OCI-LY7 (cell line): ENCODE measurements at regions of chr1 and their contacts with region 1.

Region 1: DNA sequence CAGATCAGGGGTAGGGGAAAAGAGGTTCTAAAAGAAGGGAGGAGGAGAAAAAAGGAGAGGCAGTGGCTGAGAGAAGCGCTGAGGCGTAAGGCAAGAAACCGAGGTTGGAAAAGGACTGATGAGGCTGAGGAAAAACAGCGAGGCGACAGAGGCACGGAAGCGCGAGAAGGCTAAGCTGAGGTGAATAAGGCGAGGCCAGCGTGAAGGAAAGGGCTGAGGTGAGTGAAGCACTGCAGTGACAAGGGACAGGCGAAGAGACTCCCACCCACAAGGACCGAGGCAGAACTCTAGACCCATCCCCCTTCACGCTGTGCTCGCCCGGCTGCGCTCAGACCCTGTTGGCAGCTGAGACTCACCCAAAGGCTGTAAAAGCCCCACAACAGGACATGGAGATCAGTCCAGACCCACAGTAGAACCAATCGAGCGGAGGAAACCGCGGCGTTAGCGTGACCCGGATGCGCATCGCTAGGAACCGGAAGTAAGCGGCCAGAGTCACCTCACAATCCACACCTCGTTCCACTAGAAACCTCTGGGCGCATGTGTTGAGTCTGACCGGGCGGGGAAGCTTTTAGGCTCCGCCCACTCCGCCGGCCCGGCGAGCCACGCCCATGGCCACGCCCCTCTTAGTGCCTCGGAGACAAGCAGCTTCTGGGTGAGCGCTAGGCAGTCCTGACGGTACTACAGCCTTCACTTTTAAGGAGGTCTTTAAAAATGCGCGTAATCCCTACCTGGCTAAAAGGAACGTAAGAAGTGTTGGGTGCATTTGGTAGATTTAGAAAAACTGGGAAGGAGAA is at the start of gene EYA3:
- DNase-seq: peak; percentile 99
- H3K4me3 ChIP-seq: peak within 1 kb of the TSS; percentile 75
- H3K27ac ChIP-seq: peak within 1 kb of the TSS; percentile 82
- H3K4me1 ChIP-seq: peaks cover 58% of the 10 kb centered on the region
- CTCF ChIP-seq: no peak
- total RNA-seq, gene EYA3: 24.1 and 29.0 TPM in 2 replicates

Region 2: GRCh38 chr1:27634177-27634984 is 454.0 kb before region 1 on chr1:
- CTCF ChIA-PET with region 1: no interaction called
- POLR2A ChIA-PET with region 1: no interaction called
- intact Hi-C with region 1: no loop called
- DNase-seq: no peak
- H3K4me3 ChIP-seq: no peak overlapping the region
- H3K27ac ChIP-seq: no peak overlapping the region
- H3K4me1 ChIP-seq: peaks cover 51% of the 10 kb centered on the region
- CTCF ChIP-seq: no peak

Region 3: GRCh38 chr1:27858072-27858958 is 230.1 kb before region 1 on chr1:
- CTCF ChIA-PET with region 1: no interaction called
- POLR2A ChIA-PET with region 1: no interaction called
- intact Hi-C with region 1: loop called (anchors 2 kb)
- DNase-seq: peak; percentile 80
- H3K4me3 ChIP-seq: no peak overlapping the region
- H3K27ac ChIP-seq: no peak overlapping the region
- H3K4me1 ChIP-seq: peaks cover 11% of the 10 kb centered on the region
- CTCF ChIP-seq: peak; percentile 97

Region 4: DNA sequence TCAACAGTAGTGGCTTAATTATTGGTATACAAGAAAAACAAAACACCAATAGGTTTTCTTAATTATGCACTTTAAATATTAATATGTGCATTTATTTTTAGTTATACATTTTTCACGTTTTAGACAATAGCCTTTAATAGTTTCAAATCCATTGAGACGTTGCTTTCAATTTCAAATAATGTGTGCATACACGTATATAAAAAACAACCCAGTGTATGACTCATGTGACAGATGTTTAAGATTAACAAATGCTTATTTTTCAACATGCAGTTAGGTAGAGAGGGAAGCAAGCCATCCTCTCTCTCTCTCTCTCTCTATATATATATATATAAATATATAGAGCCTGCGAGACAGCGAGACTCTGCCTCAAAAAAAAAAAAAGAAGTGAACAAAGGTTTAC is 24.3 kb before region 1 on chr1:
- CTCF ChIA-PET with region 1: interaction called, 5 read pairs
- POLR2A ChIA-PET with region 1: interaction called, 138 read pairs
- intact Hi-C with region 1: loop called (anchors 1 kb)
- DNase-seq: peak; percentile 44
- H3K4me3 ChIP-seq: peak overlapping the region; percentile 63
- H3K27ac ChIP-seq: peak overlapping the region; percentile 88
- H3K4me1 ChIP-seq: peaks cover 81% of the 10 kb centered on the region
- CTCF ChIP-seq: no peak

Region 5: DNA sequence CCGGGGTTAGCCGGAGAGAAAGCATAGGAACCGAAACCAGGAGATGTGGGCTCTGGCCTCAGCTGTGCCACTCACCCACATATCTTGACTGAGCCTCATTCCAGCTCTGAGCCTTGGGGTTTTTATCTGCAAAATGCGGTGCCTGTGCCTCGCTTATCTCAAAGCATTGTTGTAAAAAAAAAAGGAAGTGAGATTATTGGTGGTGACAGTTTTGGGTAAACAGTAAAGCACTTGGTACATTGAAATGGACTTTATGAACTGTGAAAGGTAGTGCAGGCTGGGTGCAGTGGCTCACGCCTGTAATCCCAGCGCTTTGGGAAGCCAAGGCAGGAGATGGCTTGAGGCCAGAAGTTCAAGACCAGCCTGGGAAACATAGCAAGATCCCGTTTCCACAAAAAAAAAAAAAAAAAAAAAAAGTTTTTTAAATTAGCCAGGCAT is 84.4 kb after region 1 on chr1:
- CTCF ChIA-PET with region 1: interaction called, 18 read pairs
- POLR2A ChIA-PET with region 1: interaction called, 10 read pairs
- intact Hi-C with region 1: loop called (anchors 1 kb)
- DNase-seq: peak; percentile 93
- H3K4me3 ChIP-seq: peak overlapping the region; percentile 77
- H3K27ac ChIP-seq: peak overlapping the region; percentile 97
- H3K4me1 ChIP-seq: peaks cover 79% of the 10 kb centered on the region
- CTCF ChIP-seq: no peak

Region 6: GRCh38 chr1:28190337-28190979 is 102.1 kb after region 1 on chr1:
- CTCF ChIA-PET with region 1: no interaction called
- POLR2A ChIA-PET with region 1: no interaction called
- intact Hi-C with region 1: no loop called
- DNase-seq: no peak
- H3K4me3 ChIP-seq: no peak overlapping the region
- H3K27ac ChIP-seq: no peak overlapping the region
- H3K4me1 ChIP-seq: peaks cover 11% of the 10 kb centered on the region
- CTCF ChIP-seq: no peak

Region 7: GRCh38 chr1:28505406-28506187 is 417.2 kb after region 1 on chr1 and contains the start of gene RCC1:
- CTCF ChIA-PET with region 1: no interaction called
- POLR2A ChIA-PET with region 1: no interaction called
- intact Hi-C with region 1: loop called (anchors 10 kb)
- DNase-seq: peak; percentile 99
- H3K4me3 ChIP-seq: peak within 1 kb of the TSS; percentile 85
- H3K27ac ChIP-seq: peak within 1 kb of the TSS; percentile 94
- H3K4me1 ChIP-seq: peaks cover 42% of the 10 kb centered on the region
- CTCF ChIP-seq: no peak
- total RNA-seq, gene RCC1: 87.6 and 101 TPM in 2 replicates